ENCODE measurements at regions of chr12 and their contacts with region 1.

Region 1: DNA sequence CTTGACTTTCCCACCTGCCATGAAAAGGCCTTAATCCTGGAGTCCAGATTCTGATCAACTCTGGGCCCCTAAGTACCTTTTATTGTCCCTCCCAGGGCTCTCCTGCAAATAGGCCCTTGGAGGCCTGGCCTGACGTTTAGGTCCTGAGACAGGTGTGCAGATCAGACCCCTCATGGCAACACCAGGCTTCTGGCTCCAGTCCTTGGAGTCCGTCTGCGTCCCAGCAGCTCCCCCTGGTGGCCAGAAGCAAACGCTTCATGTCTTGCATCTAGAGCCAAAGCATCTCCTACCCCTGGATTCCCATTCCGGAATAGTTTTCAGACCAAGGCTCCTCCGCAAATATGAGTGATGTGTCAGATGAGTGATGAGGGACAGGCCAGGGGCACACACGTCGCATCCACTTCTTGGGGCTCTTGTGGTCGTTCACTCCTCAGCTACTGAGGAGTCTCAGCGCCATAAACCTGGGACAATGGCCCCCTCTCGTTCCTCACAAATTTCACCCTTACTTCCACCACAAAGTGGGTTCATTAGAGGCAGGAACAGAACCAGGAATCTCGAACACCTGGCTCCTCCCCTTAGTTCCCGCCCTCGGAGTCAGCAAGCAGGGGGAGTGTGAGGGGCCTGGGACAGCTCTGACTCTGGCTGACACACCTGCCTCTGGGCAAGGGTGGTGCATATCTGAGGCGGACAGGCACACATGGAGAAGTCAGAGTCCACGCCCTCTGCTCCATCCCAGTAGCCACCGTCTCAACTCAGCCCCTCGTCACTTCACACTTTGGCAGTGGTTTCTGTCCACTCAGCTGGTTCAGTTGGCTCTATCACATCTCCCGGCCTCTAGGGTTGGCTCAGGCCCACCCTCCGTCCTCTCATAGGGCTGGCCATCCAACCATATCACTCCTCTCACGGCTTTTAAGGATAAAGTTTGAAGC is 77.9 kb upstream of the PWP1 start:
- DNase-seq: peak; percentile 86
- ATAC-seq: peak; percentile 81
- H3K4me3 Mint-ChIP-seq: no peak overlapping the region
- H3K27ac Mint-ChIP-seq: no peak overlapping the region
- H3K4me1 Mint-ChIP-seq: no peaks in the 10 kb centered on the region
- H3K27me3 Mint-ChIP-seq: no peaks in the 10 kb centered on the region
- CTCF ChIP-seq: peak; percentile 87

Region 2: GRCh38 chr12:107622005-107622404 is 14.3 kb after region 1 on chr12:
- CTCF ChIA-PET with region 1: interaction called, 17 read pairs
- POLR2A ChIA-PET with region 1: no interaction called
- intact Hi-C with region 1: no loop called
- DNase-seq: peak; percentile 30
- ATAC-seq: peak; percentile 37
- H3K4me3 Mint-ChIP-seq: no peak overlapping the region
- H3K27ac Mint-ChIP-seq: no peak overlapping the region
- H3K4me1 Mint-ChIP-seq: no peaks in the 10 kb centered on the region
- H3K27me3 Mint-ChIP-seq: no peaks in the 10 kb centered on the region
- CTCF ChIP-seq: peak; percentile 70

Region 3: GRCh38 chr12:107973950-107974349 is 366.2 kb after region 1 on chr12:
- CTCF ChIA-PET with region 1: no interaction called
- POLR2A ChIA-PET with region 1: no interaction called
- intact Hi-C with region 1: no loop called
- DNase-seq: no peak
- ATAC-seq: no peak
- H3K4me3 Mint-ChIP-seq: no peak overlapping the region
- H3K27ac Mint-ChIP-seq: no peak overlapping the region
- H3K4me1 Mint-ChIP-seq: no peaks in the 10 kb centered on the region
- H3K27me3 Mint-ChIP-seq: peaks cover 13% of the 10 kb centered on the region
- CTCF ChIP-seq: no peak

Measured in activated CD8-positive, alpha-beta T cell treated with anti-CD3 and anti-CD28 coated beads for 36 hours (primary cell).